GM12878 (cell line): ENCODE measurements at regions of chr3 and their contacts with region 1.

Region 1: DNA sequence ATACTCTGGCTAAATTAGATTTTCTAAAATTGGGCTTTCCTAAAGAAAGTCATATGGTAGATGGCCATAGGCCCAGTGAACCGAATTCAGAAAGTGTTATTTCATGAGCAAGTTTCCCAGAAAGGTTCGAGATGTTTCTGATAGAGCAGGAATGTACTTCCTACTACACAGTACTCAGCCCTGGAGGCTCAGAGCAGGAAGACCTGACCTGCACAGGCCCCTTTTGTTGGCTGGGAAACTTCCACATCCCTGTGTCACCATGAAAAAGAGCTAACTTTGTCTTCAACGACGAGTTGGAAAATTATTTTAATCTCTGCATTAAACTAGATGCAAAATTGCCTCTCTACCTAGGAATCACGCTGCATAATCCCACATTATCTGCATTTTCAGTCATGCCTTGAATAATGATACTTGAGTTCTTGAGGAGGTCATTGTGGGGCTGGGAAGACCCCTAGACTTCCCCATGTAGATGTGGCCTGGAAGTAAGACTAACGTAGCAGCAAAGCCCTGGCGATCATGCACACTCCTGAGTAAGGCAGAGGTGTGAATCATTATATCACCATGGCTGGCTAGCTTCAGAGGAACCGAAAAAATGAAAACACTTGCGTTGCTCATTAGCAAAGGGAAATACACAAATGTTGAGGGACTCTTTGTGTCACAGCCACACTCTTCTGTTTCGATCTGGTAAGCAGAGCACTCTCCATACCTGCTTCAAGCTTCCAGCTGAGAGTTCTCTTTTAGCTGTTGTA is 47.1 kb downstream of the CMTM7 start:
- DNase-seq: peak; percentile 92
- ATAC-seq: peak; percentile 89
- H3K4me3 ChIP-seq: no peak overlapping the region
- H3K27ac ChIP-seq: peak overlapping the region; percentile 38
- H3K4me1 ChIP-seq: peaks cover 56% of the 10 kb centered on the region
- H3K27me3 ChIP-seq: no peaks in the 10 kb centered on the region
- CTCF ChIP-seq: no peak
- EP300 ChIP-seq: peak; percentile 96 to 99
- POLR2A ChIP-seq: no peak
- RAD21 ChIP-seq: no peak

Region 2: DNA sequence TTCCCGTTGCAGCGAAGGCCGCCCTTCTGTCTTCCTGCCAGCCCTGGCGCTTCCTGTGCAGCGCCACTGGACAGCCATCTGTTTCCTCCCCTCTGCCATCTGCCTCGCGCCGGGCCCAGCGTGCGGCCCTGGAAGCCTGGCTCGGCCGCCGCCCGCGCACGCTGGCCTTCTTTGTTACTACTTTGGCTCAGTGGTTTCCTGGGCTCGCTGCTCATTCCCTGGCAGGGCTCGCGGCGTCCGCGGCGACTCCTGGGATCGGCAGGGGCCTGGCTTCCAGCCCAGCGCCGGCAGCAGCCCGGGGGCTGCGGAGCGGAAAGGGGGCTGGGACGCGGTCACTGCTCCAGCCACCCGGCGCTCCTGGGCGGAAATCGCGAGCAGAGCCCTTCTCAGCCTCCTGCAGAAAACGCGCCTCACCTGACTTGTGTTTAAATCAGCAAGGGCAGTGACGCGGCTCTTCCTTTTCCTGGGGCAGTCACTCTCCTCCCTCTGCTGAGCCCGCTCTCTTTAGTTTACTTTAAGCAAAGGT is 37.2 kb before region 1 on chr3:
- CTCF ChIA-PET with region 1: interaction called, 5 read pairs
- POLR2A ChIA-PET with region 1: interaction called, 6 read pairs
- RAD21 ChIA-PET with region 1: interaction called, 10 read pairs
- SMC1A ChIA-PET with region 1: interaction called, 16 read pairs
- in situ Hi-C with region 1: no loop called
- intact Hi-C with region 1: no loop called
- DNase-seq: no peak
- ATAC-seq: peak; percentile 83
- H3K4me3 ChIP-seq: peak overlapping the region; percentile 61
- H3K27ac ChIP-seq: no peak overlapping the region
- H3K4me1 ChIP-seq: peaks cover 3% of the 10 kb centered on the region
- H3K27me3 ChIP-seq: peaks cover 0 to 3% of the 10 kb centered on the region in 2 experiments; a peak in 1 of 4 replicates
- CTCF ChIP-seq: no peak
- EP300 ChIP-seq: no peak
- POLR2A ChIP-seq: no peak
- RAD21 ChIP-seq: no peak

Region 3: DNA sequence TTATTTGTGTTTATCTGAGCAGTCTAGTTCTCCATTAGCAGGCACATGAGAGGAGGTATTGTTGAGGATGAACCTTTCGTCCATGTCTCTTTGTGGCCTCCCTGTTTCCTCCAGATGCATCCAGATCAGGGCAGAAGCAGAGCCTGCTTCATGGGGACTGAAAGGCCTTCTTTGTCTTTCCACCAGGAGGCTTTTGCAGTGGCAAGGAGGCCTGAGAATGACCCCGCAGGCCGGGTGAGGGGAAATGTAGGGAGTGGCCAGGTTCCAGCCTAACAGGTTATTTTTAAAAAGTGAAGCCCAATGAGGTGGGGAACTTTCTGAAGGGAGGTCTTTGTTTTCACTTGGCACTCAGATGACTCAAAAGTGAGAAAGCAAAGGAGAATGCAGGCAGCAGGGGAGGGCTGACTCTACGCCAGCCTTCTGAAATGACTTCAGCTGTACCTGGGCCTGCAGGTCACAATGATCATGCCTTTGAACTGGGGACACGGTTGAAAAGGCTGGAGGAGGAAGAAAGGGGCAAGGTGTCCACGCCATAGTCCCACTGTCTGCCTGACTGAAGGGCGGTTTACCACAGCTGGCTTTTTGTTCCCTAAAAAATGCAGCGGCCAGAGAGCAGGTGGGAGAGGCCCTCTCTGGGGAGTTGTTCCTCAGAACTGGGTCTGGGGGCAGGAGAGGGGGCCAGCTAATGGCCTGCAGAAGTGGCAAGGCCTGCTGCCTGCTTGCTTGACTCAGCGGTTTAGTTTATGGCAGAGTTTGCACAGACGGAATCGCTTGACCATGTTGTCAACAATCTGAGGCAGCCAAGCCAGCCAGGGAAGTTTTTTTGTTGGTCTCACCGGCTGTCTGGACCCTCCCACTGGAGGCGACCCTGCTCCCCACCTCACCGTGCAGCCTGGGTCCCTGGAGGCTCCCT is 18.4 kb before region 1 on chr3:
- CTCF ChIA-PET with region 1: interaction called, 21 read pairs
- POLR2A ChIA-PET with region 1: interaction called, 158 read pairs
- RAD21 ChIA-PET with region 1: interaction called, 187 read pairs
- SMC1A ChIA-PET with region 1: interaction called, 307 read pairs
- in situ Hi-C with region 1: no loop called
- intact Hi-C with region 1: loop called (anchors 1 kb)
- DNase-seq: peak; percentile 56
- ATAC-seq: peak; percentile 91
- H3K4me3 ChIP-seq: no peak overlapping the region
- H3K27ac ChIP-seq: no peak overlapping the region
- H3K4me1 ChIP-seq: peaks cover 35% of the 10 kb centered on the region
- H3K27me3 ChIP-seq: no peaks in the 10 kb centered on the region
- CTCF ChIP-seq: peak in 1 of 3 experiments; percentile 22; a peak in 2 of 6 replicates
- EP300 ChIP-seq: peak; percentile 68 to 89; a peak in 3 of 4 replicates
- POLR2A ChIP-seq: no peak
- RAD21 ChIP-seq: peak; percentile 48

Region 4: DNA sequence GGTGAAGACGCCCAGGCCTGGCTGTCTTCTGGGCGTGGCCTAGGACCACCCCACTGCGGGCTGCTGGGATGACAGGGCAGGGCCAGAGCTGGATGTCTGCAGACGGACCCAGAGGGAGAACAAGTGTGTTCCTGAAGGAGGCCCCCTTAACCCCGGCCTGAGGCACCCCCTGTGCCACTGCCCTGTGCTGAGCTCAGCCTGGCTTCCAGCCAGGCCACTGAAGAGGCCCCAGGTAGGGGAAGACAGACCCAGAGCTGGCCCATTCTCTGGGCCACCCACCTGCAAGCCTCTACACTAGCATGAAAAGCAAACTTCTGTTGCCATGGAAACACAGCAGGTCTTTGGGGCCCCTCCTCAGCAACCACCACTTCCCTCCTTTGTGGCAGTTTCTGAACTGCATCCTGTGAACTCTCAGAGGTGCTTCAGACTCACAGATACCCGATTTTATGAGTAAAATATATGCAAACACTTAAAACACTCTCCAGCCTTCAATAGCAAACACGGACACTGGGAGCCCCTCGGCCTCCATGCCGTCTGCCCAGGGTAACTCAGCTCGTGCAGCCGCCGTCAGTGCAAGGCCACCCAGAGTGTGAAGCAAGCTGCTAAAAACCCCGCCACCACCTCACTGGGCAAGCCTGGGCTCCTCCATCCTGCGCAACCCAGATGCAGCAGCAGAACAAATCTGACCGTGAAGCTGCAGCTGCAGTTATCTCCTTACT is 21.4 kb after region 1 on chr3:
- CTCF ChIA-PET with region 1: interaction called, 41 read pairs
- POLR2A ChIA-PET with region 1: interaction called, 20 read pairs
- RAD21 ChIA-PET with region 1: interaction called, 66 read pairs
- SMC1A ChIA-PET with region 1: interaction called, 119 read pairs
- in situ Hi-C with region 1: no loop called
- intact Hi-C with region 1: loop called (anchors 1 kb)
- DNase-seq: no peak
- ATAC-seq: peak; percentile 76
- H3K4me3 ChIP-seq: peak overlapping the region; percentile 30; the same call in 1 of the 2 replicates
- H3K27ac ChIP-seq: no peak overlapping the region
- H3K4me1 ChIP-seq: peaks cover 36% of the 10 kb centered on the region
- H3K27me3 ChIP-seq: no peaks in the 10 kb centered on the region
- CTCF ChIP-seq: no peak
- EP300 ChIP-seq: no peak
- POLR2A ChIP-seq: no peak
- RAD21 ChIP-seq: no peak